H1 (cell line): ENCODE measurements at regions of chr19 and their contacts with region 1.

Region 1: DNA sequence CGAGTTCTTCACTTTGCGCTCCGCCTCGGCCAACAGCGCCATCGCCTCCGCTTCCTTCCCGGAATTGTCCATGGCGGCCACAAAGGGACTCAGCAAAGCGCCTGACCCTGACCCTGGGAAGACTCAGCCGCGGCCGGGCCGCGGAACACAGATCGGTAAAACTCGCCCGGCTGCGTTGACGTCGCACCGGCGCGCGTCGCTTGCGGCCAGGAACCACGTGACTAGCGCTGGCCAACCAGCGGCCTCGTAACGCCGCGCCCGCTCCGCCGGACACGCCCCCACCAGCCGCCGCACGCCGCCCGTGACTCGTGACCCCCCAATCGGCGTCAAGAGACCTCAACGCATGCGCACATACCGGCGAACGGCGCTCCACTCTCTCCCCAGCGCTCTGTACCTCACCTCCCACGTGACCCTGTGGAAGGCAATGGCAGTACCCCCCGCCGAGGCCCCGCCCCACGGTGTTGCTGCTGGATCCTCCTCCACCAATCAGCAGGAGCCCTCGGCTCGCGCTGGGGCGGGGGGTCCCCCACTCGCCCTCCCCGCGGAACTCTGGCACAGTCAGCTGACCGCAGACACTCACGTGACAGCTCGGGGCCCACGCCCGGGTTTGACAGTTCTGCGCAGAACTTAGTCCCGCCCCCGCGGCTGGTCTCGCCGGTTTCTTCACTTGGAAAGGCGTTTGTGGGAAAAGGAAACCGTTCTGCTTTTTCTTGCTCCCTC is at the start of gene NAPA:
- DNase-seq: peak; percentile 100
- H3K4me3 ChIP-seq: peak within 1 kb of the TSS; percentile 88 to 96 (median 94)
- H3K27ac ChIP-seq: peak within 1 kb of the TSS; percentile 60; the same call in 1 of the 2 replicates
- H3K4me1 ChIP-seq: peaks cover 0 to 3% (median 3%) of the 10 kb centered on the region in 4 experiments; a peak in 5 of 7 replicates
- H3K27me3 ChIP-seq: no peaks in the 10 kb centered on the region
- CTCF ChIP-seq: peak in 1 of 3 experiments; percentile 70; a peak in 1 of 4 replicates
- EP300 ChIP-seq: peak in 1 of 2 experiments; percentile 74; a peak in 1 of 3 replicates
- POLR2A ChIP-seq: peak in 1 of 2 experiments; percentile 85; a peak in 2 of 3 replicates
- RAD21 ChIP-seq: peak; percentile 52 to 65
- total RNA-seq, gene NAPA: 58.3 and 58.5 TPM in 2 replicates

Region 2: GRCh38 chr19:47461876-47462275 is 53.2 kb before region 1 on chr19:
- CTCF ChIA-PET with region 1: no interaction called
- POLR2A ChIA-PET with region 1: no interaction called
- DNase-seq: no peak
- H3K4me3 ChIP-seq: no peak overlapping the region
- H3K27ac ChIP-seq: no peak overlapping the region
- H3K4me1 ChIP-seq: peaks cover 0 to 4% (median 0%) of the 10 kb centered on the region in 4 experiments; a peak in 4 of 7 replicates
- H3K27me3 ChIP-seq: peaks cover 0 to 10% (median 5%) of the 10 kb centered on the region in 4 experiments; a peak in 4 of 7 replicates
- CTCF ChIP-seq: no peak
- EP300 ChIP-seq: no peak
- POLR2A ChIP-seq: no peak
- RAD21 ChIP-seq: no peak

Region 3: GRCh38 chr19:47499863-47500830 is 14.9 kb before region 1 on chr19:
- CTCF ChIA-PET with region 1: interaction called, 13 read pairs
- POLR2A ChIA-PET with region 1: interaction called, 4 read pairs
- DNase-seq: no peak
- H3K4me3 ChIP-seq: peak overlapping the region in 3 of 4 experiments; percentile 9 to 23 (median 15); a peak in 2 of 8 replicates
- H3K27ac ChIP-seq: 0 out of 2 replicates have a peak overlapping the region, but pooled peaks have one; percentile 5
- H3K4me1 ChIP-seq: peaks cover 0 to 6% (median 3%) of the 10 kb centered on the region in 4 experiments; a peak in 4 of 7 replicates
- H3K27me3 ChIP-seq: no peaks in the 10 kb centered on the region
- CTCF ChIP-seq: no peak
- EP300 ChIP-seq: no peak
- POLR2A ChIP-seq: no peak
- RAD21 ChIP-seq: no peak

Region 4: DNA sequence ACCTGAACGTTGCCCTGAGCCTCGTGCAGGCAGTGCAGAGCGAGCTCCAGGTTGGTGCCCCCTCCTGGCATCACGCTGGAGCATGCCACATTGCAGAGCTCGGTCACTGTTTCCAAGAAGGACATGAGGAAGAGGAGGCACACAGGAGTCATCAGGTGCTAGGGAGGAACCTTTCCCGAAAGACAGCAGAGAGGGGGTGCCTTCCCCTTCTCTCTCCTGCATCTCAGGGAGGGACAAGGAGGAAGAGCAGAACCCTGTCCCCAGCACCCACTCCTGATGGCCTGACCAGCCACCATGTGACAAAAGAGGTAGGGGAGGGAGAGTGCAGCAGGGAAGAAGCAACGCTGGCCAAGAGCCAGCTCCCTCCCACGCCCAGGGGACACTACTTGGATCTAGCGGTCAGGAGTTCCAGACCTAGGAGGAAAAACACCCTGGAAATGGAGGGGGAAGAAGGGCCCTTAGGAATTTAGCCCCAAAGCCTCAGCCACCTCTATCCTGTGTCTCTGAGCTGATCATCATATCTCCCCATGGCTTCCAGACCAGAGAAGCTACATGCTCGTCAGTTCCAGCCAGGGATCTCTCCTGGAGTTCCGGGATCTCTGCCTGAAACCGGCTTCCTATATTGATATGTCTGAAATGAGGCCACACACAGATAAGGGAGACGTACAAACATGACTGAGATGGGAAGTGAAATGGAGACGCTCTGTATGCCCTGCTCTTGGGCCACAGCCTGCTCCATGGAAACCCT is 16.8 kb after region 1 on chr19:
- CTCF ChIA-PET with region 1: interaction called, 11 read pairs
- POLR2A ChIA-PET with region 1: interaction called, 6 read pairs
- DNase-seq: no peak
- H3K4me3 ChIP-seq: no peak overlapping the region
- H3K27ac ChIP-seq: no peak overlapping the region; the same call in 1 of the 2 replicates
- H3K4me1 ChIP-seq: no peaks in the 10 kb centered on the region
- H3K27me3 ChIP-seq: no peaks in the 10 kb centered on the region; a peak in 1 of 7 replicates
- CTCF ChIP-seq: peak in 2 of 3 experiments; percentile 12 to 26; a peak in 3 of 4 replicates
- EP300 ChIP-seq: no peak
- POLR2A ChIP-seq: no peak
- RAD21 ChIP-seq: peak in 1 of 2 experiments; percentile 16; a peak in 1 of 4 replicates

Region 5: DNA sequence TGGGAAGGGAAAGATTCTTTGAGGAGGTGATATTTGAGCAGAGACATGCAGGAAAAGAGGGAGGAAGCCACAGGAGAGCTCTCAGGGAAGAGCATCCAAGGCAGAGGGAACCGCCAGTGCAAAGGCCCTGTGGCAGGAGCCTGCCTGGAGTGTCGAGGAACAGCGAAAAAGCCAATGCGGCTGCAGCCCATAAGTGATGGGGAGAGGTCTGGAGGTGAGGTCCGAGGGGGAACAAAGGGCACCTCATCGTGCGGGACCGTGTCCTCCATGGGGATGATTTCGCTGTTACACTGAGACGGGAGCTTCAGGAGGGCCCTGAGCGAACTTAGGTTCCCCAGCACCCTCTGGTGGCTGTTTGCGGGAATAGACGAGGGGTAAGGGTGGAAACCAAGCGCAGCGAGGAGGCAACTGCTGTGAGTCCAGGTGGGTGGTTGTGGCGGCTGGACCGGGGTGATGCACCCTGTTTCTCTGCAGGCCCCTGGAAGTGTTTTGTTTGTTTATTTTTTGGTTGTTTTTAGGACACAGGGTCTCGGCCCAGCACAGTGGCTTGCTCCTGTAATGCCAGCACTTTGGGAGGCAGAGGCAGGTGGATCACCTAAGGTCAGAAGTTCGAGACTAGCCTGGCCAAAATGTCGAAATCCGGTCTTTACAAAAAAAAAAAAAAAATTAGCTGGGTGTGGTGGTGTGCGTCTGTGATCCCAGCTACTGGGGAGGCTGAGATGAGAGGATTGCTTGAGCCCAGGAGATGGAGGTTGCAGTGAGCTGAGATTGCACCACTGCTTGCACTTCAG is 192.3 kb after region 1 on chr19:
- CTCF ChIA-PET with region 1: interaction called, 21 read pairs
- POLR2A ChIA-PET with region 1: no interaction called
- DNase-seq: peak in 1 of 2 experiments; percentile 94
- H3K4me3 ChIP-seq: no peak overlapping the region
- H3K27ac ChIP-seq: no peak overlapping the region
- H3K4me1 ChIP-seq: no peaks in the 10 kb centered on the region
- H3K27me3 ChIP-seq: no peaks in the 10 kb centered on the region
- CTCF ChIP-seq: peak; percentile 91 to 93 (median 92)
- EP300 ChIP-seq: peak in 1 of 2 experiments; percentile 40; a peak in 1 of 3 replicates
- POLR2A ChIP-seq: no peak
- RAD21 ChIP-seq: peak; percentile 90 to 91